OCI-LY7 (cell line): ENCODE measurements at regions of chr11 and their contacts with region 1.

Region 1: GRCh38 chr11:67648140-67649123 is 2.1 kb downstream of the ACY3 start:
- DNase-seq: peak; percentile 95
- H3K4me3 ChIP-seq: peak overlapping the region; percentile 70
- H3K27ac ChIP-seq: peak overlapping the region; percentile 97
- H3K4me1 ChIP-seq: peaks cover 85% of the 10 kb centered on the region
- CTCF ChIP-seq: peak; percentile 89

Region 2: DNA sequence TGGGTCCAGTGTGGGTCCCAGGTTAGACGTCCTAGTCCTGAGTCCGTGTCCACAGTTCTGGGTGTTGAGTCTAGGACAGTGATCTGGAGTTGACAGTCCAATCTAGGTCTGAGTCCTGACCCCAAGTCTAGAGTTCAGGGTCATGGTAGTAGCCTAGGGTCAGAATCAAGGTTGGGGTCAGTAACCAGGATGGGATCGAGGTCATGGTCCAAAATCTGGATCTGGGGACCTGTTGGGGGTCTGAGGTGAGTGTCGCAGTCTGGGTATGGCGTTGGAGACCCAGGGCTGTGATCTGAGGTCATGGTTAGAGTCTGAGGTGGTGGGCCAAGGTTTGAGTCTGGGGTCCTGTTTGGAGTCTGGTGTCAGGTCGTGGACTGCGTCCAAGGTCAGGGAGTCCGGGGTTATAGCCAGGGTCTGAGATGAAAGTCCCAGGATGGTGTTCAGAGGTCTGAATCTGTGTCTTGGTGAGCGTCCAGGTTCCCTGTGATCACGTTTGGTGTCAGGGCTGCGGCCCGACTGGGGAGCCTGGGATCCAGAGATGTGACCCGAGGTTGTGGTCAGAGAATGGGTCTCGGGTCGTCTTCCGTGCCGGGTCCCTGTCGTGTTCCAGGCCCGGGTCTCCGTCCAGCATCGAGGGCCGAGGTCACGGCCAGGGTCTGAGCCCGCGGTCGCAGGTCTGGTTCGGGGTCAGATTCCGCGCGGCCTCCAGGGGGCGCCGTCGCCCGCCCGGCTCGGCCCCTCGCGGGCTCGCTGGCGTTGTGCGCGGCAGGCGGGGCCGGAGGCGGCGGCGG is 382.6 kb before region 1 on chr11:
- CTCF ChIA-PET with region 1: no interaction called
- POLR2A ChIA-PET with region 1: no interaction called
- intact Hi-C with region 1: loop called (anchors 5 kb)
- DNase-seq: peak; percentile 82
- H3K4me3 ChIP-seq: peak overlapping the region; percentile 50
- H3K27ac ChIP-seq: peak overlapping the region; percentile 36
- H3K4me1 ChIP-seq: peaks cover 74% of the 10 kb centered on the region
- CTCF ChIP-seq: peak; percentile 72

Region 3: DNA sequence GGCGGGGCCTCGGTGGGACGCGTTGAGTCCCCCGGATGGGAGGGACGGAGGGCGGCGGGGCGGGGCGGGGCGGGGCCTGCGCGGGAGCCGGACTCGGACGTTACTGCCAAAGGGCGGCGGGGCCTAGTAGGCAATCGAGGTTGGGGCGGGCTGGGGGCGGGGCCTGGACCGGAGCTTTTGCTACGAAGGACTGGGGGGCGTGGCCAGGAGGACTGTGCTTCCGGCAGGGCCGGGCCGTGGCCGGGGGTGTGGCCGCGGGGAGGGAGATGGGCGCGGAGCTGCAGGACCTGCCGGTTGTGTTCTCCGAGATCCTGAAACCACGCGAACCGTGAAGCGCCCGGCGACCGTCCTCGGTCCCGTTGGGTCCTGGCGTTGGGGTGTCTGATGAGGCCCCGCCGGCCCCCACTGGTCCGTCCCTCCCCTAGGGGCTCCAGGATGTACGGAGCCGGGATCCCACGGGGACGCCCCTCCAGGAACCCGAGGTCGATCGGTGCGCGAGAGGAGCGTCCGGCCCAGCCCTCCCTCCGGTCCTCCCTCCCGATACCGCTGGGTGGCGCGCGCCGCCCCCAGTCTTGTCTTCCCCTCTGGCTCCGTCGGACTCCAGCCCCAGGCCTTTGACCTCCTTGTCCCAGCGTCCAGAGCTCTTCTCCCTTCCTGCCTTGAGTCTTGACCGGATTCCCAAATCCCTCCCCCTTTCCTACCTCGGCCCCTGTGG is 18.0 kb before region 1 on chr11:
- CTCF ChIA-PET with region 1: interaction called, 6 read pairs
- POLR2A ChIA-PET with region 1: interaction called, 10 read pairs
- intact Hi-C with region 1: loop called (anchors 1 kb)
- DNase-seq: peak; percentile 99
- H3K4me3 ChIP-seq: peak overlapping the region; percentile 77
- H3K27ac ChIP-seq: peak overlapping the region; percentile 52
- H3K4me1 ChIP-seq: peaks cover 23% of the 10 kb centered on the region
- CTCF ChIP-seq: peak; percentile 75

Region 4: DNA sequence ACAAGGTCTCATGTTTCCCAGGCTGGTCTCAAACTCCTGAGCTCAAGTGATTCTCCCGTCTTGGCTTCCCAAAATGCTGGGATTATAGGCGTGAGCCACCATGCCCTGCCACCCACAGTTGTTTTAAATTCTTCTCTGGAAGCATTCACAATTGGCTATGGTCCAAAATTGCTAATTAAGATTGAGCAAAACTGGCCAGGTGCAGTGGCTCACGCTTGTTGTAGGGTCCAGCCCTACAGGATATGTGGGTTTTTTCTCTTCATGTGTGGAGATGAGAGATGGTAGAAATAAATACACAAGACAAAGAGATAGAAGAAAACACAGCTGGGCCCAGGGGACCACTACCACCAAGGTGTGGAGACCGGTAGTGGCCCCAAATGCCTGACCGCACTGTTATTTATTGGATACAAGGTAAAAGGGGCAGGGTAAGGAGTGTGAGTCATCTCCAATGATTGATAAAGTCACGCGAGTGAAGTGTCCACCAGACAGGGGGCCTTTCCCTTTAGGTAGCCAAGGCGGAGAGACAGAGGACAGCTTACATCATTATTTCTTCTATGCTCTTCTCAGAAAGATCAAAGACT is 10.3 kb after region 1 on chr11:
- CTCF ChIA-PET with region 1: interaction called, 13 read pairs
- POLR2A ChIA-PET with region 1: interaction called, 69 read pairs
- intact Hi-C with region 1: loop called (anchors 1 kb)
- DNase-seq: peak; percentile 79
- H3K4me3 ChIP-seq: peak overlapping the region; percentile 29
- H3K27ac ChIP-seq: peak overlapping the region; percentile 89
- H3K4me1 ChIP-seq: peaks cover 26% of the 10 kb centered on the region
- CTCF ChIP-seq: no peak

Region 5: GRCh38 chr11:67665541-67666362 is 17.3 kb after region 1 on chr11:
- CTCF ChIA-PET with region 1: interaction called, 38 read pairs
- POLR2A ChIA-PET with region 1: interaction called, 69 read pairs
- intact Hi-C with region 1: loop called (anchors 1 kb)
- DNase-seq: peak; percentile 35
- H3K4me3 ChIP-seq: no peak overlapping the region
- H3K27ac ChIP-seq: no peak overlapping the region
- H3K4me1 ChIP-seq: peaks cover 47% of the 10 kb centered on the region
- CTCF ChIP-seq: peak; percentile 60

Region 6: DNA sequence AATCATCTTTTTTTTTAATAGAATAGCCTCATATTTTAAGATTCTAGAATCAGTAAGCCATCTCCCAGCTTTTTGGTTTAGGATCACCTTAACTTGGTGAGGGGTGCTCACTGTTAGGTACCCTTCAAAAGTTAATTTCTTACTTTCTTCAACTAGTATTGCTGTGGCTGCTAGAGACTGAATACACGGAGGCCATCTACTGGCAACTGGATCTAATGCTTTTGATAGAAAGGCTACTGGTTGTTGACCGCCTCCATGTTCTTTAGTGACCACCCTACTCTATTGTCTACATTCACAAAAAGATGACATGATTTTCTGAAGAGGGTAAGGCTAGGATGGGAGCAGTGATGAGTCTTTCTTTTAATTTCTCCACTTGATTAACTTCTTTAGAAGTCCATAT is 42.7 kb after region 1 on chr11:
- CTCF ChIA-PET with region 1: interaction called, 17 read pairs
- POLR2A ChIA-PET with region 1: interaction called, 9 read pairs
- intact Hi-C with region 1: loop called (anchors 1 kb)
- DNase-seq: peak; percentile 63
- H3K4me3 ChIP-seq: no peak overlapping the region
- H3K27ac ChIP-seq: no peak overlapping the region
- H3K4me1 ChIP-seq: peaks cover 19% of the 10 kb centered on the region
- CTCF ChIP-seq: peak; percentile 92